ENCODE measurements at regions of chr6 and their contacts with region 1.

Region 1: GRCh38 chr6:96194675-96195074 is 178.9 kb downstream of the FUT9 start:
- DNase-seq: no peak
- H3K4me3 ChIP-seq: no peak overlapping the region
- H3K4me3 Mint-ChIP-seq: no peak overlapping the region
- H3K27ac Mint-ChIP-seq: peak overlapping the region; percentile 60
- H3K4me1 ChIP-seq: peaks cover 18% of the 10 kb centered on the region
- H3K4me1 Mint-ChIP-seq: peaks cover 20% of the 10 kb centered on the region
- H3K27me3 ChIP-seq: no peaks in the 10 kb centered on the region
- H3K27me3 Mint-ChIP-seq: no peaks in the 10 kb centered on the region
- CTCF ChIP-seq: no peak

Region 2: DNA sequence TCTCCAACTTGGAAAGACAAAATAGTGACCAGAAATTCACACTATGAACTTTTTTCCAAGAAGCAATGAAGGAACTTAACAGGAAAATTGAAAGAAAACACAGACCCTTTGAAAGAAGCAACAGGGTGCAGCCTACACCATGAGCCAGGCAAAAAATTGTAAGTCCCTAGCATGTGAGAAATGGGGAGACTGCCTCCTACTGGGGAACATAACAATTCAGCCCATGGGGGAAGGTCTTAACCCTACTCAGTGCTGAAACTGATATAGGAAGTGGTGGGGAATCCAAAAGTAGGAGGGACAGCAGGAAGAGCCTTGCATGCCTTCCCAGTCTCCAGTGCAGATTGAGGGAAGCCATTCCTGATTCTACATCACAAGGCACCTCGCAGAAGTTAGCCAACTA is 91.8 kb after region 1 on chr6:
- CTCF ChIA-PET with region 1: no interaction called
- POLR2A ChIA-PET with region 1: no interaction called
- intact Hi-C with region 1: loop called (anchors 1 kb)
- DNase-seq: no peak
- H3K4me3 ChIP-seq: no peak overlapping the region
- H3K4me3 Mint-ChIP-seq: no peak overlapping the region
- H3K27ac Mint-ChIP-seq: peak overlapping the region; percentile 79
- H3K4me1 ChIP-seq: peaks cover 38% of the 10 kb centered on the region
- H3K4me1 Mint-ChIP-seq: peaks cover 23% of the 10 kb centered on the region
- H3K27me3 ChIP-seq: no peaks in the 10 kb centered on the region
- H3K27me3 Mint-ChIP-seq: no peaks in the 10 kb centered on the region
- CTCF ChIP-seq: no peak